Posterior vena cava (tissue), 2 donors: ENCODE measurements at regions of chr17 and their contacts with region 1.

Region 1: DNA sequence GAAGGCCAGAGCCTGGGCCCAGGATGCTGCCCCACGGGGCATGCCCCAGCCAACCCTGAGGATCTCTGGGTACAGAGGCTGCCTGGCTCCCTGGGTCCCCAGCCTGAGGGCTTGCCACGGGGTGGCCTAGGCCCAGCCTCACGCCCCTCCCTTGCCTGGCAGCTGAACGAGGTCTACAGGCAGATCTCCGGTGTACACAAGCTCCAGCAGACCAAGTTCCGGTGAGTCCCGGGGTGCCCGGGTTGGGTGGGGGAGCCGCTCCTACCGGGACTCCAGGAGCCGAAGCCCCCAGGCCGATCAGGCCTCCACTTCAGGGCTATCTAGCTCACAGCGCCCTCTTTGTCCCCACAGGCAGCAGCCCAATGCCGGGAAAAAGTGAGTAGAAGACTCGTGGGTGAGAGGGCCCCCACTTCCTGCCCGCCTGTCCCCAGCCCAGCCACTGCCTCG is 19.4 kb downstream of the ITGB4 start:
- DNase-seq: no peak

Region 2: GRCh38 chr17:75689441-75689873 is 51.2 kb before region 1 on chr17:
- intact Hi-C with region 1: loop called in 1 of 2 experiments (anchors 5 kb)
- DNase-seq: peak; percentile 16

Region 3: GRCh38 chr17:75822119-75822799 is 81.6 kb after region 1 on chr17:
- intact Hi-C with region 1: no loop called
- DNase-seq: peak; percentile 71